ENCODE measurements at regions of chr21 and their contacts with region 1.

Region 1: GRCh38 chr21:33479679-33480480 is at the start of gene TMEM50B:
- DNase-seq: peak; percentile 98
- CTCF ChIP-seq: peak; percentile 25

Region 2: GRCh38 chr21:33491373-33492102 is 11.7 kb after region 1 on chr21 and contains the start of gene DNAJC28:
- CTCF ChIA-PET with region 1: interaction called, 30 read pairs
- POLR2A ChIA-PET with region 1: interaction called, 21 read pairs
- DNase-seq: peak; percentile 96
- CTCF ChIP-seq: no peak

Region 3: GRCh38 chr21:34157521-34157920 is 677.6 kb after region 1 on chr21:
- CTCF ChIA-PET with region 1: no interaction called
- POLR2A ChIA-PET with region 1: no interaction called
- DNase-seq: no peak
- CTCF ChIP-seq: no peak

Measured in GM10248 (cell line).